IMR-90 (cell line): ENCODE measurements at regions of chr5 and their contacts with region 1.

Region 1: DNA sequence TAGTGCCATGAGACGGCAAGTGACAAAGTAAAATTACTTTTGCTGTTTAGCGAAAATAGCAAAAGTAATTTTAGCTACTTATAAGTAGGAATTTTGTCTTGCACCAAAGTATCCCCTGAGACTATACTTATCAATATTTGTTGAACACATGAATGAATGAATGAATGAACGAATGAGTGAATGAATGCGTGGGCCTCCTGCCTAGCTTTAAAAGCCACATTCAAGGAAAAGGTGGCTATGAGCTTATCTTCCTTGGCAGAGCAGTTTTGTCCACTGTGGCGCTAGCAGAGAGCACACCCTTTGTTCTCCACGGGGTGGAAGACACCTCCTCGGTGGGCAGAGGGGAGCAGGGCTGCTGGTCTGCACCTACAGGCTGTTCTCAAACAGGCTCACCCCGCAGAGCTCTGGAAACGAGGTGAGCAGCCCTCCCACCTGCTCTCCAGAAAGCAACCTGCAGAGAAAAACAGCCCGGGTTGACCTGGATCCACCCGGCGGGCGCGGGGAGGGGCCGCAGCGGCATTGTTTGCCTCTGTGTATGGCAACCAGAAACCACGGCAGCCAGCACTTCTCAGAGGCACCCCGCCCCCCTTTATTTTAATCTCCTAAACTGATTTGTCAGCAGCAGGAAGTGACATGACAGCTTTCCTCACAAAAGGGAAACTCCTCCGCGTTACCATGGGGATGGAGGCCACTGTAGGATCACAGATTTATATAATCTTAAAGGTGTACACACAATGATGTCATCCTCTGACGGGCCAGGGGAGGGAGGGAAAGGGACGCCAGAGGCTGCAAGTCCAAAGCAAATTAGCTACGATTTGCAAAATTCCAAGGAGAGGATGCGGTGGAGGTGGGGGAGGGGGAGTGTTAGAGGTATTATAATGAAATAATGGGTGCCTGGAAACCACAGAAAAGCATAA is 5.9 kb downstream of the DUSP1 start:
- DNase-seq: peak; percentile 99
- ATAC-seq: peak; percentile 51
- H3K4me3 ChIP-seq: peak overlapping the region; percentile 12
- H3K27ac ChIP-seq: peak overlapping the region; percentile 54
- H3K4me1 ChIP-seq: peaks cover 3% of the 10 kb centered on the region
- H3K27me3 ChIP-seq: no peaks in the 10 kb centered on the region
- CTCF ChIP-seq: no peak
- POLR2A ChIP-seq: no peak
- RAD21 ChIP-seq: no peak

Region 2: DNA sequence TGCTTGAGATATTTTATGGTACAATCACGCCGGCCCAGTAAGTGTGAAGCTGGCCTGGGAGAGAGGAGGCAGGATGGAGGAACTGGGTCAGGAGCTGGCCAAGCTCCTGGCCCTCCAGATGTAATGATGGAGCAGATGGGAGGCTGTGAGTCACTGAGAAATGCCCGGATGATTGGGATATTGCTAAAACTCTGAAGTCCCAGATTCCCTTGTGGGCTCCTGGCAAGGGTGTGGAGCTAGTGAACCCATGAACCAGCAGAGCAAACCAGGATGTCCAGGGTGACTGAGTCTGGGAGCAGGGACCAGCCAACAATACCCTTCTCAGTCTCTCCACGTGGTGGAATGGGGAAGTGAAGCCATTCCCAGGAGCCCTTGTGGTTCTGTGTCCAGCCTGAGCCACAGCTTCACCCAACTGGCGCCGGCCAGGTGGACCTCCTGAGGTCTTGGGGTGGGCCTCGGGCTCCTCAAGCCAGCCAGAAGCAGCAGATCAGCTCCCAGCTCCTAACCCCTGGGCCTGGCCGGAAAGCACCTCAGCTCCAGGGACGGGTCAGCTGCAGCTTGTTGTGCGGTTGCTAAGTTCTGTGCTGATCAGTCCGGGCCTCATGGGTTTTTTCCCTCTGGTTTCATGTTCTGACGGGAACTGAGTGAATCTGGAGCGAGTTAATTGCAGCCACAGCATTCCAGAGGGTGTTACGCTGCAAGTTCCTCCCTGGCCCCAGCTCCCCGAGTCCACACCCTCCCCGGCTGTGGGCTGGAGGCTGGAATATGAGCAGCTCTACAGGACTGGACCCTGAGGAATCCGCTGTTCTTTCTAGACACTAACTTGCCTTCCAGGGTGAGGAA is 31.8 kb before region 1 on chr5:
- CTCF ChIA-PET with region 1: interaction called, 3 read pairs
- POLR2A ChIA-PET with region 1: interaction called, 3 read pairs
- dilution Hi-C with region 1: no loop called
- in situ Hi-C with region 1: no loop called
- intact Hi-C with region 1: loop called (anchors 5 kb)
- DNase-seq: peak; percentile 90
- ATAC-seq: peak; percentile 89
- H3K4me3 ChIP-seq: no peak overlapping the region
- H3K27ac ChIP-seq: peak overlapping the region; percentile 51
- H3K4me1 ChIP-seq: peaks cover 18% of the 10 kb centered on the region
- H3K27me3 ChIP-seq: no peaks in the 10 kb centered on the region
- CTCF ChIP-seq: no peak
- POLR2A ChIP-seq: peak; percentile 45; the same call in 1 of the 2 replicates
- RAD21 ChIP-seq: no peak; the same call in 1 of the 2 replicates

Region 3: DNA sequence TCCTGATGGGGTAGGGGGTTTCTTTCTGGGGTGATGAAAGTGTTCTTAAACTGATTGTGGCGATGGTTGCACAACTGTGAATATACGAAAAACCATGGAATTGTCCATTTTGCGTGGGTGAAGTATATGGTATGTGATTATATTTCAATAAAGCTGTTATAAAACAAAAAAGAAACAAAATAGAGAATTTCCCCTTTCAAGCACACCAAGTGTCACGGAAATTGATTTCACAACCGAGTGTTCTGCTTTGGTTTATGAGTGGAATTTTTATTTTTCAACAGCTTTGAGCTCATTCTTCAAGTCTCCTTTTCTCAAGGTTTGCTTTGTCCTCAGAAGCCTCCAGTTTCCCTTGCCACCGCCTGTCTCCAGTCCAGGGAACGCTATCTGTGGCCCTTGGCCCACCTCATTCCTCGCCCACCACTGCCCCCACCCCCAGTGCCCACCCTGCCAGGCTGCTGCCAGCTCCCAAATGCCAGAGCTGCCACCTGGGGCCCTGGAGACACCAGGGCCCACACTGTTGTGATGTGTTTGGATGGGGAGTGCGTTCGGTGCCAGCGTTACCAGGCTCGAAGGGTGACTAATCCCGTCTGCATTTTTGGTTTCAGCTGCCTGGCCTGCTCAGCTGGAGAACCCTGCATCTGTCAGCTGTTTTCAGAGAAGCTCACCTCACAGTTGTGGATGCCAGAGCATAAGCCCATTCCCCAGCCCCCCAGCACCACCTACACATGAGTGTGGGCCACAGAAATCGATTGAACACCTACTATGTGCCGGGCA is 24.5 kb before region 1 on chr5:
- CTCF ChIA-PET with region 1: no interaction called
- POLR2A ChIA-PET with region 1: interaction called, 10 read pairs
- dilution Hi-C with region 1: no loop called
- in situ Hi-C with region 1: no loop called
- intact Hi-C with region 1: loop called (anchors 2 kb)
- DNase-seq: peak; percentile 93
- ATAC-seq: peak; percentile 88
- H3K4me3 ChIP-seq: no peak overlapping the region
- H3K27ac ChIP-seq: peak overlapping the region; percentile 92
- H3K4me1 ChIP-seq: peaks cover 16% of the 10 kb centered on the region
- H3K27me3 ChIP-seq: no peaks in the 10 kb centered on the region
- CTCF ChIP-seq: no peak
- POLR2A ChIP-seq: peak; percentile 53; the same call in 1 of the 2 replicates
- RAD21 ChIP-seq: peak; percentile 25; the same call in 1 of the 2 replicates